HepG2 (cell line): ENCODE measurements at regions of chr2 and their contacts with region 1.

Region 1: DNA sequence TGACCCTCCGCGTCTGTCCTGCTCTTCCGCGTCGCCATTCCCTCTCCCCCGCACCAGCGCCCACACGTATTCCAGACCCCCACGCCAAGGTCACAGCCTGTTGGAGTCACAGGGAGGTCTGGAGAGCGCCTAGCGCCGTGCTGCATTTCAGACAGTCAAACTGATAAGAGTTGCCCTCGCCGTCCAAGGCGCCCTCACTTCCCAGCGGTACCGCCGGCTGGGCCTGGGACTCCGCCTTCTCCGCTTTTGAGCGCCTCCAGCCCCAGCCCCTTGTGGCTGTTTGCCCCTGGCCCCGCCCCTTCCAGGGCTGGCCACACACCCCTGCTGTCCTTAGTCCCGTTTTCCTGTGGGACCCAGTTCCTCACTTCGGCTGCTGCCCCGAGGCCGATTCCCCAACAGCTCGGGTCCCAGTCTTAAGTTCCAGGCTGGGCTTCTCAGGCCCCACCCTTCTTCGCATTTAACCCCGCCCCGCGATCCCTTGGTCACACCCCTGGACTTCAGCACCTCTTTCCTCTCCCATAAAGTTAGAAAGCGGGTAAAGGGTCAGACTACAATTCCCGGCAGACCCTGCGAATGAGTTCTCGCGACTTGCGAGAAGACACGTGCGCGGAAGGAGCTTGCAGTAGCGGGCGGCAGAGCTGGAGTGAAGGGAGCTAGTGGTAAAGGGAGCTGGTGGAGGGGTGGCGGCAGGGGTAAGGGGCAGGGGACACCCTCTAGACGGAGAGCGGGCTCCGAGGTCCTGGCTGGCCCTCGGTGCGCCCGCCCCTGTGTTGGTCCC is at the start of gene GMPPA:
- DNase-seq: peak; percentile 99
- ATAC-seq: peak; percentile 82
- H3K4me3 ChIP-seq: peak within 1 kb of the TSS; percentile 79 to 93 (median 89)
- H3K27ac ChIP-seq: peak within 1 kb of the TSS; percentile 70
- H3K4me1 ChIP-seq: peaks cover 56% of the 10 kb centered on the region
- H3K27me3 ChIP-seq: peaks cover 6 to 40% of the 10 kb centered on the region in 2 experiments; a peak in 4 of 5 replicates
- CTCF ChIP-seq: peak; percentile 36
- EP300 ChIP-seq: peak in 1 of 2 experiments; percentile 7; a peak in 2 of 4 replicates
- POLR2A ChIP-seq: peak in 1 of 2 experiments; percentile 84; a peak in 2 of 4 replicates
- RAD21 ChIP-seq: no peak
- total RNA-seq, gene GMPPA: 81.1 and 88.7 TPM in 2 replicates

Region 2: DNA sequence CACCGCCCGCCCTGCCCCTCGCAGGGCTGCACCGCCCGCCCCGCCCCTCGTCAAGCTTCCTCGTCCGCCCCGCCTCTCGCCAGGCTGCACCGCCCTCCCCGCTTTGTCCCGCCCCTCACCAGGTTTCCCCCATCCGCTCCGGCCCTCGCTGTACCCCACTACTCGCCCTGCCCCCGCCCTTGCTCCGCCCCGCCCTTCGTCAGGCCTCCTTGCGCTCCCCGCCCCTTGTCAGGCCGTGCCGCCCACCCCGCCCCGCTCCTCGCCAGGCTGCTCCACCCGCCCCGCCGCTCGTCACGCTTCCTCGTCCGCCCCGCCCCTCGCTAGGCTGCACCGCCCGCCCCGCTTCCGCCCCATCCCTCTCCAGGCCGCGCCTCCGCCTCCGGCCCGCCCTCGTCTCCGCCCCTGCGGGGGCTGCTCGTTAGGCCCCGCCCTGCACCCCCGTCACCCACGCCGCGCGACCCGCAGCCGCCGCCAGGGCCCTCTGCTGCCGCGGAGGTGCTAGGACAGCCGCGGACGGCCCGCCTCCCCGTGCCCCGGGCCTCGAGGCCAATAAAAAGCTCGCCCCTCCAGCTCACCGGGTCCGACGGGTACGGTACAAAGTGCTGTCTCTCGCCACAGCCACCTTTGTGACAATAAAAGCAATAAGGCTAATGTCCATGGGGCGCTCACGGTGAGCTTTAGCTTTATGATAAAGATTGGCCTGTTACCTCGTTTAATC is 110.2 kb before region 1 on chr2:
- CTCF ChIA-PET with region 1: no interaction called
- POLR2A ChIA-PET with region 1: interaction called, 29 read pairs
- in situ Hi-C with region 1: no loop called
- intact Hi-C with region 1: loop called (anchors 5 kb)
- DNase-seq: peak; percentile 87
- ATAC-seq: peak; percentile 74
- H3K4me3 ChIP-seq: peak overlapping the region; percentile 53 to 70 (median 68)
- H3K27ac ChIP-seq: peak overlapping the region; percentile 68
- H3K4me1 ChIP-seq: peaks cover 30% of the 10 kb centered on the region
- H3K27me3 ChIP-seq: no peaks in the 10 kb centered on the region; a peak in 1 of 5 replicates
- CTCF ChIP-seq: peak; percentile 78
- EP300 ChIP-seq: peak in 1 of 2 experiments; percentile 12; a peak in 1 of 4 replicates
- POLR2A ChIP-seq: peak; percentile 52 to 68; a peak in 3 of 4 replicates
- RAD21 ChIP-seq: peak; percentile 67; the same call in 1 of the 2 replicates

Region 3: GRCh38 chr2:219484343-219485200 is 13.9 kb before region 1 on chr2:
- CTCF ChIA-PET with region 1: no interaction called
- POLR2A ChIA-PET with region 1: interaction called, 12 read pairs
- in situ Hi-C with region 1: no loop called
- intact Hi-C with region 1: no loop called
- DNase-seq: no peak
- ATAC-seq: peak; percentile 30
- H3K4me3 ChIP-seq: peak overlapping the region in 1 of 3 experiments; percentile 44; a peak in 1 of 6 replicates
- H3K27ac ChIP-seq: no peak overlapping the region
- H3K4me1 ChIP-seq: peaks cover 13% of the 10 kb centered on the region
- H3K27me3 ChIP-seq: peaks cover 60 to 98% of the 10 kb centered on the region in 2 experiments
- CTCF ChIP-seq: no peak
- EP300 ChIP-seq: no peak
- POLR2A ChIP-seq: no peak
- RAD21 ChIP-seq: no peak

Region 4: DNA sequence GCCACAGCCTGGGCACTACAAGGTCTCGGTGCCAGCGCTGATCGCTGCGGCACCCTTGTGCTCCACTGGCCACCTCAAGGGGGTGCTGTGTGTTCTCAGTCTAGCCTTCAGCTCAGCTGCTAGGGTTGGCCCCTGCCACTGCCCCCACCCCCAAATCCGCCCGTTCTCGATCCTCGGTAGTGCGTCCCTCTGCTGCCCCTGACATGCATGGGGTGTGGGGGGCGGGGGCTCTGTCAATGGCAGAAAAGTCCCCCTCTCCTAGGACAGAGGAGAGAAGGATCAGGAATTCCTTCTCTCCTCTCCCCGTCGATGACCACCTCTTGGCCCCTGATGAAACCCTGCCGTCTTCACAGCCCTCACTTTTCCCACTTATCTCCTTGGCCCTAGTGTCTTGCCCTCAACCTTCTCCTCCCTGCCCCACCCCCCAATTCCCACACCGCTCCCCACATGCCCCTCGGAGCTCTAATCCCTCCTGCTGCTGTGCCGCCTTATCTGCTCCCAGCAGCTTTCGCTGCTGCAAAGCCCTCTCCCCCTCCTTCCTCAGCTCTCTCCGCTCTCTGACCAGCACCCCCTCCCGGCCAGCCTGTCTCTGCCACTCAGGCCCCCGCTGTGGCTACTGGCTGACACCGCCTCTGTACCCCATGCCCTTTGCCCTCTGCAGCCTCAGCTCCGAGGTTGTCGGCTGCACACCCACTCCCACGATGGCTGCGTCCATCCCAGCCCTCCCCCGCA is 11.5 kb after region 1 on chr2:
- CTCF ChIA-PET with region 1: interaction called, 26 read pairs
- POLR2A ChIA-PET with region 1: interaction called, 94 read pairs
- in situ Hi-C with region 1: no loop called
- intact Hi-C with region 1: loop called (anchors 1 kb)
- DNase-seq: peak; percentile 60
- ATAC-seq: peak; percentile 89
- H3K4me3 ChIP-seq: peak overlapping the region; percentile 52 to 70 (median 53)
- H3K27ac ChIP-seq: no peak overlapping the region
- H3K4me1 ChIP-seq: peaks cover 34% of the 10 kb centered on the region
- H3K27me3 ChIP-seq: peaks cover 14 to 41% of the 10 kb centered on the region in 2 experiments
- CTCF ChIP-seq: peak; percentile 92
- EP300 ChIP-seq: 0 out of 4 replicates have a peak, but pooled peaks of 1 of the 2 experiments have one; percentile 8
- POLR2A ChIP-seq: 0 out of 4 replicates have a peak, but pooled peaks have one; percentile 3 to 45
- RAD21 ChIP-seq: peak; percentile 14; the same call in 1 of the 2 replicates

Region 5: GRCh38 chr2:219552382-219553167 is 54.1 kb after region 1 on chr2:
- CTCF ChIA-PET with region 1: no interaction called
- POLR2A ChIA-PET with region 1: interaction called, 11 read pairs
- in situ Hi-C with region 1: no loop called
- intact Hi-C with region 1: no loop called
- DNase-seq: peak; percentile 79
- ATAC-seq: peak; percentile 84
- H3K4me3 ChIP-seq: peak overlapping the region; percentile 71 to 79 (median 73)
- H3K27ac ChIP-seq: peak overlapping the region; percentile 51
- H3K4me1 ChIP-seq: peaks cover 22% of the 10 kb centered on the region
- H3K27me3 ChIP-seq: no peaks in the 10 kb centered on the region
- CTCF ChIP-seq: no peak; the same call in 1 of the 2 replicates
- EP300 ChIP-seq: no peak
- POLR2A ChIP-seq: no peak
- RAD21 ChIP-seq: peak; percentile 46

Region 6: GRCh38 chr2:219571311-219572236 is 73.1 kb after region 1 on chr2 and contains the start of gene OBSL1:
- CTCF ChIA-PET with region 1: no interaction called
- POLR2A ChIA-PET with region 1: interaction called, 12 read pairs
- in situ Hi-C with region 1: no loop called
- intact Hi-C with region 1: no loop called
- DNase-seq: peak; percentile 90
- ATAC-seq: peak; percentile 85
- H3K4me3 ChIP-seq: peak within 1 kb of the TSS; percentile 90 to 95 (median 94)
- H3K27ac ChIP-seq: peak within 1 kb of the TSS; percentile 94
- H3K4me1 ChIP-seq: peaks cover 66% of the 10 kb centered on the region
- H3K27me3 ChIP-seq: no peaks in the 10 kb centered on the region
- CTCF ChIP-seq: peak; percentile 30; the same call in 1 of the 2 replicates
- EP300 ChIP-seq: peak; percentile 17 to 69; a peak in 3 of 4 replicates
- POLR2A ChIP-seq: peak in 1 of 2 experiments; percentile 63; a peak in 1 of 4 replicates
- RAD21 ChIP-seq: no peak; the same call in 1 of the 2 replicates
- total RNA-seq, gene OBSL1: 65.4 and 86.7 TPM in 2 replicates